ENCODE measurements at regions of chr15 and their contacts with region 1.

Region 1: GRCh38 chr15:52139599-52140491 is 27.3 kb upstream of the BCL2L10 start:
- DNase-seq: peak; percentile 39
- ATAC-seq: peak; percentile 83
- H3K4me3 ChIP-seq: no peak overlapping the region
- H3K27ac ChIP-seq: peak overlapping the region; percentile 66
- H3K4me1 ChIP-seq: peaks cover 35% of the 10 kb centered on the region
- H3K27me3 ChIP-seq: no peaks in the 10 kb centered on the region
- CTCF ChIP-seq: peak; percentile 78 to 91 (median 86)
- EP300 ChIP-seq: no peak
- POLR2A ChIP-seq: no peak
- RAD21 ChIP-seq: peak; percentile 98

Region 2: DNA sequence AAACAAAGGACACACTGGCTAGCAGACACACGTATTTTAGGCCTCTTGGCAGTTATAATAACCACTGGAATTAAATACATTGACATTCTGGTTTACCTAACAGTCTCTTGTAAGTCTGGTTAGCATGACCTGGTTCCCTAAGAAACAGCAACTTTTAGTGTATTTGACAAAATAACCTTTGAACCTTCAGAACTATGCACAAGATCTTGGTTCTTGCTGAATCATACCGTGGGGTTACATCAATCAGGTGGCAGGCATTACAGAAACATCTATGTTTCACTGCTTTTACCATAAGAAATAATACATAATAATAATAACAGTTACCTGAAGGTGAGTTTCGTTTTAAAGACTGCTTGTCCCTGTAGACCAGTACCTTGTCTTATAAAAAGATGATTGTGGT is 187.0 kb before region 1 on chr15:
- CTCF ChIA-PET with region 1: no interaction called
- POLR2A ChIA-PET with region 1: no interaction called
- RAD21 ChIA-PET with region 1: no interaction called
- SMC1A ChIA-PET with region 1: no interaction called
- in situ Hi-C with region 1: no loop called
- intact Hi-C with region 1: no loop called
- DNase-seq: no peak
- ATAC-seq: no peak
- H3K4me3 ChIP-seq: no peak overlapping the region
- H3K27ac ChIP-seq: no peak overlapping the region
- H3K4me1 ChIP-seq: no peaks in the 10 kb centered on the region
- H3K27me3 ChIP-seq: no peaks in the 10 kb centered on the region
- CTCF ChIP-seq: no peak
- EP300 ChIP-seq: no peak
- POLR2A ChIP-seq: no peak
- RAD21 ChIP-seq: no peak

Region 3: GRCh38 chr15:51982013-51982769 is 157.7 kb before region 1 on chr15:
- CTCF ChIA-PET with region 1: interaction called, 20 read pairs
- POLR2A ChIA-PET with region 1: interaction called, 5 read pairs
- RAD21 ChIA-PET with region 1: interaction called, 10 read pairs
- SMC1A ChIA-PET with region 1: interaction called, 44 read pairs
- in situ Hi-C with region 1: loop called (anchors 5 kb)
- intact Hi-C with region 1: loop called (anchors 1 kb)
- DNase-seq: peak; percentile 92
- ATAC-seq: peak; percentile 99
- H3K4me3 ChIP-seq: peak overlapping the region; percentile 61
- H3K27ac ChIP-seq: peak overlapping the region; percentile 73
- H3K4me1 ChIP-seq: no peaks in the 10 kb centered on the region
- H3K27me3 ChIP-seq: no peaks in the 10 kb centered on the region
- CTCF ChIP-seq: peak; percentile 60 to 88 (median 80)
- EP300 ChIP-seq: no peak
- POLR2A ChIP-seq: peak; percentile 69
- RAD21 ChIP-seq: peak; percentile 96

Region 4: GRCh38 chr15:52018693-52019387 is 121.0 kb before region 1 on chr15 and contains the start of gene MAPK6:
- CTCF ChIA-PET with region 1: interaction called, 5 read pairs
- POLR2A ChIA-PET with region 1: no interaction called
- RAD21 ChIA-PET with region 1: interaction called, 4 read pairs
- SMC1A ChIA-PET with region 1: interaction called, 11 read pairs
- in situ Hi-C with region 1: no loop called
- intact Hi-C with region 1: no loop called
- DNase-seq: peak; percentile 71
- ATAC-seq: peak; percentile 69
- H3K4me3 ChIP-seq: peak within 1 kb of the TSS; percentile 91
- H3K27ac ChIP-seq: peak within 1 kb of the TSS; percentile 99
- H3K4me1 ChIP-seq: peaks cover 15% of the 10 kb centered on the region
- H3K27me3 ChIP-seq: no peaks in the 10 kb centered on the region
- CTCF ChIP-seq: no peak
- EP300 ChIP-seq: peak in 1 of 2 experiments; percentile 61; a peak in 1 of 4 replicates
- POLR2A ChIP-seq: peak; percentile 88
- RAD21 ChIP-seq: no peak
- polyA plus RNA-seq, gene MAPK6: 20.6 to 23.4 TPM

Region 5: DNA sequence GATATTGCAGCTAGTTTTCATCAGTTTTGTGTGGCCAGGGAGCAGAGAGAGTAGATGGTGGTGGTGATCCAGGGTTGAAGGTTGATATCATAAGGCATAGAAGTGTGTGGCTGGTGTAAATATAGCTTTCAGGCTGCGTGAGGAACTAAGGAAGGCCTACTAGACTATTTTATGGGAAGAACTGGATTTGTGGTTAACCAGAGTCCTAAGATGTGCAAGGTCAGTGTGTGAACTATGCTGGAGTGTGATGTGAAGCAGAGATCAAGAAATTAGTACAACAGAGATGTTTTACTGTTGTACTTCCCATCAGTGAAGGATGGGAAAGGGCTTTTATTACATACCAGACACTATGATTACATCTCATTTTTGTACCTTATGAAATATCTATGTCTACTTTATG is 79.3 kb before region 1 on chr15:
- CTCF ChIA-PET with region 1: interaction called, 32 read pairs
- POLR2A ChIA-PET with region 1: no interaction called
- RAD21 ChIA-PET with region 1: interaction called, 3 read pairs
- SMC1A ChIA-PET with region 1: interaction called, 3 read pairs
- in situ Hi-C with region 1: no loop called
- intact Hi-C with region 1: loop called (anchors 5 kb)
- DNase-seq: no peak
- ATAC-seq: no peak
- H3K4me3 ChIP-seq: no peak overlapping the region
- H3K27ac ChIP-seq: no peak overlapping the region
- H3K4me1 ChIP-seq: no peaks in the 10 kb centered on the region
- H3K27me3 ChIP-seq: no peaks in the 10 kb centered on the region
- CTCF ChIP-seq: no peak
- EP300 ChIP-seq: no peak
- POLR2A ChIP-seq: no peak
- RAD21 ChIP-seq: no peak

Region 6: GRCh38 chr15:52103217-52104207 is 36.3 kb before region 1 on chr15:
- CTCF ChIA-PET with region 1: interaction called, 115 read pairs
- POLR2A ChIA-PET with region 1: interaction called, 13 read pairs
- RAD21 ChIA-PET with region 1: interaction called, 139 read pairs
- SMC1A ChIA-PET with region 1: interaction called, 163 read pairs
- in situ Hi-C with region 1: no loop called
- intact Hi-C with region 1: loop called (anchors 2 kb)
- DNase-seq: peak; percentile 94
- ATAC-seq: peak; percentile 76
- H3K4me3 ChIP-seq: no peak overlapping the region
- H3K27ac ChIP-seq: no peak overlapping the region
- H3K4me1 ChIP-seq: peaks cover 33% of the 10 kb centered on the region
- H3K27me3 ChIP-seq: no peaks in the 10 kb centered on the region
- CTCF ChIP-seq: no peak
- EP300 ChIP-seq: peak; percentile 59 to 76; a peak in 3 of 4 replicates
- POLR2A ChIP-seq: 0 out of 2 replicates have a peak, but pooled peaks have one; percentile 12
- RAD21 ChIP-seq: peak; percentile 31; the same call in 1 of the 2 replicates

Region 7: DNA sequence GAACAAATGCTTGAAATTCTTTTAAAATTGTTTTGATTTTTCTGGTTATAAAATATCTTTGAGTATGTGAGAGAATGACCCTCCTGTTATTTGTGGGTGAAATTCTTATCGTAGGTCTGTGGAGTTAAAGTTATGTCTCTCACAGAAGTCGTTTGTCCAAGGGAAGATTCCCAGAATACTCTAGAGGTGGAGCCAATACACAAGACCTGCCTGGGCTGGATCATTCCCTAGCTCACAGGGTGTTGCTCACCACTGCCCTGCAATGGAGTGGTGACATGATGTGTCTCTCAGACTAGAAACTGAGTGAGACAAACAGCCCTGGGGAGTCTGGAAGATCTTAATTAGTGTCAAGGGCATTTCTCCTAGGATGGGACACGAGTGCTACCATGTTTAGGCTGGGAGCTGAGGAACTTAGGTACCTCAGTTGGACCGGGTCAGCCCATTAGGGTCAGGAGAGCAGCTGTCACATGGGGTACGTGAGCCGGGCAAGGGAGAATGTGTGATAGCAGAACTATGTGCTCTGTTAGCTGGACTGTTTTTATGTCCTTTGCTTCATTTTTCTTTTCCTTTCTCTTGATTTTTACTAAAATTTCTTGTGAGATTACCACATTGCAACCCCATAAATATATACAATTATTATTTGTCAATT is 209.3 kb after region 1 on chr15:
- CTCF ChIA-PET with region 1: no interaction called
- POLR2A ChIA-PET with region 1: no interaction called
- RAD21 ChIA-PET with region 1: no interaction called
- SMC1A ChIA-PET with region 1: no interaction called
- in situ Hi-C with region 1: no loop called
- intact Hi-C with region 1: no loop called
- DNase-seq: no peak
- ATAC-seq: no peak
- H3K4me3 ChIP-seq: no peak overlapping the region
- H3K27ac ChIP-seq: no peak overlapping the region
- H3K4me1 ChIP-seq: no peaks in the 10 kb centered on the region
- H3K27me3 ChIP-seq: no peaks in the 10 kb centered on the region
- CTCF ChIP-seq: no peak
- EP300 ChIP-seq: no peak
- POLR2A ChIP-seq: no peak
- RAD21 ChIP-seq: no peak

Region 8: GRCh38 chr15:52523192-52523591 is 383.3 kb after region 1 on chr15:
- CTCF ChIA-PET with region 1: no interaction called
- POLR2A ChIA-PET with region 1: no interaction called
- RAD21 ChIA-PET with region 1: no interaction called
- SMC1A ChIA-PET with region 1: no interaction called
- in situ Hi-C with region 1: no loop called
- intact Hi-C with region 1: no loop called
- DNase-seq: no peak
- ATAC-seq: no peak
- H3K4me3 ChIP-seq: no peak overlapping the region
- H3K27ac ChIP-seq: no peak overlapping the region
- H3K4me1 ChIP-seq: peaks cover 6% of the 10 kb centered on the region; the same call in 1 of the 2 replicates
- H3K27me3 ChIP-seq: no peaks in the 10 kb centered on the region
- CTCF ChIP-seq: no peak
- EP300 ChIP-seq: no peak
- POLR2A ChIP-seq: no peak
- RAD21 ChIP-seq: no peak

Measured in GM12878 (cell line).